Activated CD8-positive, alpha-beta T cell treated with anti-CD3 and anti-CD28 coated beads, Interleukin-2, amount 10 ng/mL, durations not matched to agents 7 days and 5 days (primary cell): ENCODE measurements at regions of chr15 and their contacts with region 1.

Region 1: DNA sequence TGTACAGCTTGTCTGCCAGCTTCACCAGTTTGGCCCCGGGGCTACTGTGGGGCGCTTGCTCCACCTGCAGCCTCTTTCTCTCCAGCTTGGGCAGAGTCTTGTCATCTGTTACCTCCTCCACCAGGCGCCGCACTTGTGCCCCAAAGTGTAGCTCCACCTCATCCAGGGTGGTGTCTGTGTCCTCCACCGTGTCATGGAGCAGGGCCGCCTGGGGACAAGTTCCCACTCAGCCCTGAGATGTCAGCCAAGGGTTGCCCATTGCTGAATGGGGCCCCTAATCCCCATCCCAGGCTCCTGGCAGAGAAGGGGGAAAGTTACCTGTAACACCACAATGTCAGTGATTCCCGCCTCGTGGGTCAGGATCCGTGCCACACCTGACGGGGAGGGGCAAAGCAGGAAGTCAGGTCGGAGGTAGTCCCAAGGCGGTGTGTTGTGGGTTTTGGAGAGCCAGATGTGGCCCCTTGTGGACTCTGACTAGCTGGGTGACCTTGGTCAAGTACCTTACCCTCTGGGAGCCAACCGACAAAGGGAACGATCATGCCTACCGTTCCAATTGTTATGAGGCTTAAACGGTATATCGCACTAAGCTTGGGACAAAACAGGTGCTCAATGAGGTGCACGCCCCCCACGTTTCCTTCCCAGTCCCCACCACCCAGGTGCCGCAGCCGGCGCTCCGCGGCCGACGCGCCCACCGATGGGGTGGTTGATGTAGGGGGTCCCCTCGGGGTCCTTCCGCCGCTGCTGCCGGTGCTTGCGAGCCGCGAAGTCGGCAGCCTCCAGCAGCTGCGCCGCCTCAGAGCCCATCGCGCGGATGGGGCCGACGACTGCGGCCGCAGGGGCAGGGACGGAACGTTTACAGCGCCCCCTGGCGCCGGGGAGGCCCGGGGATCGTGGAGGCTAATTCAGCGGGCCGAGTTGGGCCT is at the start of gene HDDC3:
- DNase-seq: peak; percentile 94
- ATAC-seq: peak; percentile 59
- H3K4me3 Mint-ChIP-seq: peak within 1 kb of the TSS; percentile 97
- H3K27ac Mint-ChIP-seq: peak within 1 kb of the TSS; percentile 99
- H3K4me1 Mint-ChIP-seq: peaks cover 63% of the 10 kb centered on the region
- H3K27me3 Mint-ChIP-seq: no peaks in the 10 kb centered on the region
- total RNA-seq, gene HDDC3: 23.8 to 26.9 TPM

Region 2: DNA sequence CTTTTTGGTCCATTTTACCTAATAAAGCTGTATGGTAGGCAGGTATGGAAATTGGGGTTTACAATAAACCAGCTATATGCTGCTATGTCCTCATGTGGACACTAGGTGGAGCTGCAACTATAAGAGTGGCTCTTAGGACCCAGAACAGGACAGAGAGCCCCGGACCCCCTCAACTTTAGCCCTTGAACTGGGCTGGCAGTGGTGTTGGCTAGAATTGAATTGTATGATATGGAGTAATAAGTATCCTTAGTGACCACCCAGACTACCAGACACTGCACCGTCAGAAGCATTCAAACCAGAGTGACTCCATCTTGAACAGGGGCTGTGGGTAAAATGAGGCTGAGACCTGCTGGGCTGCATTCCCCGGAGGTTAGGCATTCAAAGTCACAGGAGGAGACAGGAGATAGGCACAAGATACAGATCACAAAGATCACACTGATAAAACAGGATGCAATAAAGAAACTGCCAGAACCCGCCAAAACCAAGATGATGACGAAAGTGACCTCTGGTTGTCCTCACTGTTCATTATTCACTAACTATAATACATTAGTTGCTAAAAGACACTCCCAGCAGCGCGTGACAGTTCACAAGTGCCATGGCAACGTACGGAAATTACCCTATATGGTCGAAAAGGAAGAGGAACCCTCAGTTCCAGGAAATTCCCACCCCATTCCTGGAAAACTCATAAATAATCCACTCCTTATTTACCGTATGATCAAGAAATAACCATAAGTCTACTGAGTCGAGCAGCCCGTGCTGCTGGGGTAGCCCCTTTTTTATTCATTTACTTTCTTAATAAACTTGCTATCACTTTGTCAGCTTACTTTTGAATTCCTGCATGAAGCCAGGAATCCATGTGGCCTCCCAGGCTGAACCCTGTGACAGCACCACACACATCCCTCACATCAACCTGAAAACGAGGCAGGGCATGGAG is 283.6 kb before region 1 on chr15:
- CTCF ChIA-PET with region 1: interaction called, 17 read pairs
- POLR2A ChIA-PET with region 1: no interaction called
- DNase-seq: peak; percentile 89
- ATAC-seq: peak; percentile 80
- H3K4me3 Mint-ChIP-seq: peak overlapping the region; percentile 64
- H3K27ac Mint-ChIP-seq: peak overlapping the region; percentile 99
- H3K4me1 Mint-ChIP-seq: peaks cover 51% of the 10 kb centered on the region
- H3K27me3 Mint-ChIP-seq: no peaks in the 10 kb centered on the region

Region 3: GRCh38 chr15:90808517-90809235 is 123.3 kb before region 1 on chr15:
- CTCF ChIA-PET with region 1: interaction called, 17 read pairs
- POLR2A ChIA-PET with region 1: interaction called, 4 read pairs
- DNase-seq: no peak
- ATAC-seq: no peak
- H3K4me3 Mint-ChIP-seq: no peak overlapping the region
- H3K27ac Mint-ChIP-seq: peak overlapping the region; percentile 39
- H3K4me1 Mint-ChIP-seq: peaks cover 66% of the 10 kb centered on the region
- H3K27me3 Mint-ChIP-seq: no peaks in the 10 kb centered on the region

Region 4: GRCh38 chr15:90902040-90902839 is 29.8 kb before region 1 on chr15:
- CTCF ChIA-PET with region 1: interaction called, 328 read pairs
- POLR2A ChIA-PET with region 1: interaction called, 110 read pairs
- DNase-seq: peak; percentile 80
- ATAC-seq: peak; percentile 84
- H3K4me3 Mint-ChIP-seq: peak overlapping the region; percentile 90
- H3K27ac Mint-ChIP-seq: peak overlapping the region; percentile 93
- H3K4me1 Mint-ChIP-seq: peaks cover 28% of the 10 kb centered on the region
- H3K27me3 Mint-ChIP-seq: no peaks in the 10 kb centered on the region

Region 5: GRCh38 chr15:90921887-90922286 is 10.1 kb before region 1 on chr15:
- CTCF ChIA-PET with region 1: interaction called, 34 read pairs
- POLR2A ChIA-PET with region 1: interaction called, 3 read pairs
- DNase-seq: no peak
- ATAC-seq: no peak
- H3K4me3 Mint-ChIP-seq: no peak overlapping the region
- H3K27ac Mint-ChIP-seq: no peak overlapping the region
- H3K4me1 Mint-ChIP-seq: peaks cover 13% of the 10 kb centered on the region
- H3K27me3 Mint-ChIP-seq: no peaks in the 10 kb centered on the region

Region 6: DNA sequence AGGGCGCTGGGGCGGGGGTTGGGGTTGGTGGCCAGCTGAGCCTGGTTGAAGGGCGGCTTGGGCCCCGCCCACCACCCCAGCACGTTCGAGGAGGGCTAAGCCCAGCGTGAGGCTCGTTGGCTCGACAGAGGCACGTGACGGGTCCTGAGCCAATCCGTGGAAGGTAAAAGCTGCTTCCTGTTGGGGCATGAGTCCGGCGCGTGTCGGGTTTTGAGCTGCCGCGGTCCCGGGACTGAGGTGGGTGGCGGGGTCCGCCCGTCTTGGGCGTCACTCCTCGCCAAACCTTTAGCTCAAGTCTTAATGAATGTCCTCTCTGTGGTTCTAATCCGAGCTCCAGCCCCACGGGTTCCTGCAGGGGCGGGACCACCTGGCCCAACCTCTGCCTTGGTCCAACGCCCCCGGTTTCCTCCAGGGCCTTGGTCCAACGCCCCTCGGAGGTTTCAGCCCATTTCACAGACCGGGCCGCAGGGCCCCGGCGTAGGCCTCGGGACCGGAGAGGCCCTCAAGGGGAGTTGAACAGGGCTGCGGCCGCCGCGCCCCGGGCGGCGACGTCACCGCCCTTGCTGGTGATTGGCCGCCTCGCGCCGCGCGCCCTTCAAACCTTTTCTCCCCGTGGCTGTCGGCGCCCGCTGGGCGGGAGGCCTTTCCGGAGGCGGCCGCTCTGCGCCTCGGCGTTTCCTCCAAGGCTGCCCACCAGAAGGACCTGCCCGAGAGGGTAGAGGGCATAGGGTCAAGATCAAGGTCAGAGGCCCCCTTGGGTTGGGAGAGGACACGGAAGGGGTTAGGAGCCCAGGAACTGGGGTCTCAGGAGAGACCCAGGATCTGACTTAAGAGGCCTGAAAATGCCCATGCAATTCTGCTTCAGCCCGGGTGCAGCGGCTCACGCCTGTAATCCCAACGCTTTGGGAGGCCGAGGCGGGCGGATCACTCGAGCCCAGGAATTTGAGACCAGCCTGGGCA is 23.0 kb after region 1 on chr15 and contains the start of gene RCCD1:
- CTCF ChIA-PET with region 1: interaction called, 154 read pairs
- POLR2A ChIA-PET with region 1: interaction called, 93 read pairs
- DNase-seq: peak; percentile 95
- ATAC-seq: peak; percentile 94
- H3K4me3 Mint-ChIP-seq: peak within 1 kb of the TSS; percentile 88
- H3K27ac Mint-ChIP-seq: peak within 1 kb of the TSS; percentile 97
- H3K4me1 Mint-ChIP-seq: peaks cover 22% of the 10 kb centered on the region
- H3K27me3 Mint-ChIP-seq: no peaks in the 10 kb centered on the region
- total RNA-seq, gene RCCD1: 30.1 to 31.9 TPM

Region 7: GRCh38 chr15:91271565-91272153 is 339.7 kb after region 1 on chr15:
- CTCF ChIA-PET with region 1: interaction called, 24 read pairs
- POLR2A ChIA-PET with region 1: no interaction called
- DNase-seq: peak; percentile 74
- ATAC-seq: no peak
- H3K4me3 Mint-ChIP-seq: peak overlapping the region; percentile 49
- H3K27ac Mint-ChIP-seq: no peak overlapping the region
- H3K4me1 Mint-ChIP-seq: peaks cover 11% of the 10 kb centered on the region
- H3K27me3 Mint-ChIP-seq: peaks cover 31% of the 10 kb centered on the region

Region 8: DNA sequence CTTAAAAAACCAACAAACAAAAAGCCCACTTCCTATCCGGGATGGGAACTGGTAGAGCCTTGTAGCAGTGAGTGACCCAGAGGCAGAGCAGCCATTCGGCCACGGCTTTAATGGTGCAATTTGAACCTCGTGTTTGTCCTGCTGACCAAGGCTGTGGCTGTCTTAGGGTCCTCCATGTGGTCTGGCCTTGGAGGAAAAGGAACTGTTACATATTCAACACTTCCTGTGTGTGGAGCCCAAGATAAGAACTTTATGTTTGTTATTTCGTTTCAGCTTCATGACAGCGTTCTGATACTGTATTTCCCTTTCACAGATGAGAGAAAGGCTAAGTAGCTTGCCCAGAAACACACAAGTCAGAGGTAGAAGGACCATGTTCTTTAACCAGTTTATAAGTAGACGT is 437.8 kb after region 1 on chr15:
- CTCF ChIA-PET with region 1: no interaction called
- POLR2A ChIA-PET with region 1: no interaction called
- DNase-seq: no peak
- ATAC-seq: peak; percentile 49
- H3K4me3 Mint-ChIP-seq: peak overlapping the region; percentile 10
- H3K27ac Mint-ChIP-seq: peak overlapping the region; percentile 79
- H3K4me1 Mint-ChIP-seq: peaks cover 52% of the 10 kb centered on the region
- H3K27me3 Mint-ChIP-seq: peaks cover 24% of the 10 kb centered on the region